ENCODE measurements at regions of chr9 and their contacts with region 1.

Region 1: DNA sequence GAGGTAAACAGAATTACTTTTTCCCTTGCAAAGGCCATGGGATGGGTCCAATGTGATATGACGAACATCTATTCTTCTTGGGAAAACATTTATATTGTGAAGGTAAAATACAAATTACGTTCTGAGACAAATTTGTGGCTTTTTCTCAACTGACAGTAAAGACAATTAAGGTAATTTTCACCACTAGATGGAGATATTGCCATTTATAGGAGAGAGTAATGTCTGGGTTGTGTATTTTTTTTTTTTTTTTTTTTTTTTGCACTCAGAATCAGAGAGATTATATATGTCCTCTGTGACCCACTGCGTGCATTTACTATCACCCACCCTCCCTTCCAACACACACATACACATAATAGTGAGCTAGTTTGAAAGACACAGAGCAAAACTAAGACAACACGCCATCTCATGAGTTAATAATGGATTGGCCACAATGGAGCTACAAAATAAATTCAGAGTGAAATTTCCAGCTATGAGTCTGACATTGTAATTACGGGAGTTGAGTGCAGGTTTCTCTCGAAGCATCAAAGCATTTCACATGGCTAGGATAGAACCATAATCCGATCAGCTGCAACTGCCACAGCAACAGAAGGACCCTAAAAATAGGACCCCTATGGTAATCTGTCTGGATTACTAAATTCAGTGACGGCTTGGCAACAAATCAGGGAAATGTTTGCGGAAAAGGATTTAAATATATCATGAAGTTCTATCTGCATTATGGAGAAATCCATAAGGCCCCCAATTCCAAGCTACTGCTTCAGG is 49.2 kb downstream of the ANXA1 start:
- DNase-seq: peak; percentile 41
- H3K4me3 ChIP-seq: no peak overlapping the region
- H3K27ac ChIP-seq: no peak overlapping the region
- H3K4me1 ChIP-seq: no peaks in the 10 kb centered on the region
- CTCF ChIP-seq: peak; percentile 80

Region 2: GRCh38 chr9:73183917-73184861 is 16.7 kb before region 1 on chr9:
- CTCF ChIA-PET with region 1: no interaction called
- POLR2A ChIA-PET with region 1: no interaction called
- intact Hi-C with region 1: no loop called
- DNase-seq: peak; percentile 52
- H3K4me3 ChIP-seq: no peak overlapping the region
- H3K27ac ChIP-seq: no peak overlapping the region
- H3K4me1 ChIP-seq: no peaks in the 10 kb centered on the region
- CTCF ChIP-seq: peak; percentile 76

Region 3: DNA sequence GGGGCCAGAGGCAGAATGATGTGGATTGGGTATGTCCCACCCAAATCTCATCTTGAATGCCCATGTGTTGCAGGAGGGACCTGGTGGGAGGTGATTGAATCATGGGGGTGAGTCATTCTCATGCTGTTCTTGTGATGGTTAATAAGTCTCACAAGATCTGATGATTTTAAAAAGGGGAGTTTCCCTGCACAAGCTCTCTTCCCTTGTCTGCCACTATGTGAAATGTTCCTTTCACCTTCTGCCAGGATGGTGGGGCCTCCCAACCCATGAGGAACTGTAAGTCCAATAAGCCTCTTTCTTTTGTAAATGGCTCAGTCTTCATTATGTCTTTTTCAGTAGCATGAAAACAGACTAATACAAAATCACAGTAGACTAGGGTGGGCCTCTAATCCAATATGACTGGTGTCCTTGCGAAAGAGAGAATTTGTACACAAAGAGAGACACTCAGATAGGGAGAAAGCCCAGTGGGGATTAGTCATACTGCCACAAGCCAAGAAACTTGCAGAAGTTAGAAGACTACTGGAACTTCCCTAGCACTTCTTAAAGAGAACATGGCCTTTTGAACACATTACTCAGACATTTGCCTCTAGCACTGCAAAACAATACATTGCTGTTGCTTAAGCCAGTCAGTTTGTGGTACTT is 19.2 kb after region 1 on chr9:
- CTCF ChIA-PET with region 1: no interaction called
- POLR2A ChIA-PET with region 1: no interaction called
- intact Hi-C with region 1: no loop called
- DNase-seq: no peak
- H3K4me3 ChIP-seq: no peak overlapping the region
- H3K27ac ChIP-seq: no peak overlapping the region
- H3K4me1 ChIP-seq: no peaks in the 10 kb centered on the region
- CTCF ChIP-seq: no peak

Region 4: DNA sequence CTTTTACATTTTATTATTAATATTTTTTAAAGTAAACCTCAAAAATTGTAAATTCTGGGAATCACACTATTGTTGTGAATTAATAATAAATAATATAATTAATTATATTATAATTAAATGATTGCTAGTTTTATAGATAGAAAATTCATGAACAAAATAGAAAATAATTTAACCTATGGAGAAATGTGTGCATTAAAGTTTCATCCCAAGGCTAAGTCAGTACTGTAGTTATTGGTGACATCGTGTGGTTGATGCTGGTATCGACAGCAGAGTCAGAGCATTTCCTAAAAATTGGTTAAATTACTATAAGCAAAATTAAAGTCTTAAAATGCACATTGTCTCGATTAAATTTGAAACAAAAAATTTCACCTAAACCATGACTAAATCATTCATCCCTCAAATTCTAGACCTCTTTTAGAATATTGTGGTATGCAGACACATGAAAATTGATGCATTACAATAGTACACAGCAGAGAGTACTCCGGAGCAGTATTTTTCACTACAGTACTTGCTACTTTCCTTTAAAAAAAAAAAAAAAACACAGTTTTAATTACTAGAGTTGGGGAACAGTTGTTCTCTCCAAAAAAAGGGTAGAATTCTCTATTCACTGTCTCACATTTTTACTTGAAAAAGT is 1370.1 kb after region 1 on chr9:
- CTCF ChIA-PET with region 1: no interaction called
- POLR2A ChIA-PET with region 1: no interaction called
- intact Hi-C with region 1: loop called (anchors 5 kb)
- DNase-seq: peak; percentile 29
- H3K4me3 ChIP-seq: no peak overlapping the region
- H3K27ac ChIP-seq: no peak overlapping the region
- H3K4me1 ChIP-seq: no peaks in the 10 kb centered on the region
- CTCF ChIP-seq: peak; percentile 86

Measured in OCI-LY7 (cell line).